ENCODE measurements at regions of chr3 and their contacts with region 1.

Region 1: GRCh38 chr3:177197041-177197727 is at the start of gene TBL1XR1:
- DNase-seq: peak; percentile 90
- ATAC-seq: peak; percentile 43
- H3K4me3 Mint-ChIP-seq: peak within 1 kb of the TSS; percentile 92
- H3K27ac Mint-ChIP-seq: peak within 1 kb of the TSS; percentile 99
- H3K4me1 Mint-ChIP-seq: peaks cover 51% of the 10 kb centered on the region
- H3K27me3 Mint-ChIP-seq: no peaks in the 10 kb centered on the region
- CTCF ChIP-seq: no peak
- total RNA-seq, gene TBL1XR1: 153 to 158 TPM

Region 2: GRCh38 chr3:177057768-177058167 is 139.4 kb before region 1 on chr3:
- CTCF ChIA-PET with region 1: interaction called, 3 read pairs
- POLR2A ChIA-PET with region 1: interaction called, 5 read pairs
- intact Hi-C with region 1: loop called (anchors 5 kb)
- DNase-seq: peak; percentile 79
- ATAC-seq: peak; percentile 94
- H3K4me3 Mint-ChIP-seq: no peak overlapping the region
- H3K27ac Mint-ChIP-seq: no peak overlapping the region
- H3K4me1 Mint-ChIP-seq: peaks cover 40% of the 10 kb centered on the region
- H3K27me3 Mint-ChIP-seq: no peaks in the 10 kb centered on the region
- CTCF ChIP-seq: no peak

Region 3: DNA sequence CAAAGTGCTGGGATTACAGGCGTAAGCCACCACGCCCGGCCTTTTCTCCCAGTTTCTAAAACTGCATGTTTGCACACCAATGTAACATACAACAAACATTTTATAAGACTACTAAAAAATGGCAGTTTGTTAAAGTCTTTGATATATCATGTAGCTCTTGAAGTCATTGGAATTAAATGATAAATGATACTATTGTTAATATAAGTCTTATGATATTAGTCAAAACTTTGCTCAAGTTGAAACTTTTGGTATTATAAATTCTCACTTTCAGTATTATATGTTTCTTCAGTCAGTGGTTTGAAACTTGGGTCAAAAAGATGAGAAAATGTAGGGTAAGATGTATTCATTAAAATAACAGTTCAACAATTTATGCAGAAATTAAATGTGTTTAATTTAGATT is 117.7 kb after region 1 on chr3:
- CTCF ChIA-PET with region 1: no interaction called
- POLR2A ChIA-PET with region 1: no interaction called
- intact Hi-C with region 1: loop called (anchors 2 kb)
- DNase-seq: no peak
- ATAC-seq: peak; percentile 69
- H3K4me3 Mint-ChIP-seq: no peak overlapping the region
- H3K27ac Mint-ChIP-seq: peak overlapping the region; percentile 63
- H3K4me1 Mint-ChIP-seq: peaks cover 20% of the 10 kb centered on the region
- H3K27me3 Mint-ChIP-seq: no peaks in the 10 kb centered on the region
- CTCF ChIP-seq: no peak

Region 4: GRCh38 chr3:177337541-177338331 is 140.6 kb after region 1 on chr3:
- CTCF ChIA-PET with region 1: no interaction called
- POLR2A ChIA-PET with region 1: interaction called, 17 read pairs
- intact Hi-C with region 1: loop called (anchors 2 kb)
- DNase-seq: peak; percentile 93
- ATAC-seq: peak; percentile 85
- H3K4me3 Mint-ChIP-seq: peak overlapping the region; percentile 40
- H3K27ac Mint-ChIP-seq: peak overlapping the region; percentile 87
- H3K4me1 Mint-ChIP-seq: peaks cover 55% of the 10 kb centered on the region
- H3K27me3 Mint-ChIP-seq: no peaks in the 10 kb centered on the region
- CTCF ChIP-seq: no peak

Region 5: DNA sequence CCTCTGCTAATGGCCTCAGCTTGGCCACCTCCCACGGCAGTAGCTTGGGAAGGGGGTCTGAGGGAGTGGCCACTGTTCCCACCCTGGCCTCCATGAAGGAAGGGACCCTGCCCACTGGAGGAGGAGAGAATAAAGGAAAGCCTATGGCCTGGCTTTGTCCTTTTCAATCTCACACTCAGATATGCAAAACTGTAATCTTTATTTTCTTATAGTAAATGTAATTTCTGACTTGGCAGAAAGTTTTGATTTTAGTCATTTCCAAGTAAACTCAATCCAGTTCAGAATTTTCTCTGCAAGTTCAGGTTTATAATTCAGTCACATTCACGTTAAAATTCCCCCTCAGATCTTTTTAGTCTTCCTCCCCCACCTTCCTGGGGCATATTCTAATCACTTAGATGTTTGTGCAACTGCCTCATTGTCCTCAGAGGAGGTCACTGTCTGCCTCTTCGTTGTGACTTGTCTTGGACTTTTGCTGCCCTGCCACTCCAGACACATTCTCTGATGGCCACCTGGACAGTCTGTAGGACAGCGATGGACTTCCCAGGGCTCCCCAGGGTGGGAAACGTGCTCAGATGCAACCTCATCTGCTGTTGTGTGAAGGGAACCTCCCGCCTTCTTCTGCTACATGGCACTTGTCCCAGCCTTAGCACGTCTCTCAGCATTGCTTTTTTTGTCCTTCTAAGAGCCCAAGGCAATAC is 222.9 kb after region 1 on chr3:
- CTCF ChIA-PET with region 1: no interaction called
- POLR2A ChIA-PET with region 1: no interaction called
- intact Hi-C with region 1: loop called (anchors 2 kb)
- DNase-seq: peak; percentile 32
- ATAC-seq: peak; percentile 87
- H3K4me3 Mint-ChIP-seq: no peak overlapping the region
- H3K27ac Mint-ChIP-seq: peak overlapping the region; percentile 83
- H3K4me1 Mint-ChIP-seq: peaks cover 34% of the 10 kb centered on the region
- H3K27me3 Mint-ChIP-seq: no peaks in the 10 kb centered on the region
- CTCF ChIP-seq: no peak